Left cardiac atrium (tissue), 4 donors: ENCODE measurements at regions of chr13 and their contacts with region 1.

Region 1: DNA sequence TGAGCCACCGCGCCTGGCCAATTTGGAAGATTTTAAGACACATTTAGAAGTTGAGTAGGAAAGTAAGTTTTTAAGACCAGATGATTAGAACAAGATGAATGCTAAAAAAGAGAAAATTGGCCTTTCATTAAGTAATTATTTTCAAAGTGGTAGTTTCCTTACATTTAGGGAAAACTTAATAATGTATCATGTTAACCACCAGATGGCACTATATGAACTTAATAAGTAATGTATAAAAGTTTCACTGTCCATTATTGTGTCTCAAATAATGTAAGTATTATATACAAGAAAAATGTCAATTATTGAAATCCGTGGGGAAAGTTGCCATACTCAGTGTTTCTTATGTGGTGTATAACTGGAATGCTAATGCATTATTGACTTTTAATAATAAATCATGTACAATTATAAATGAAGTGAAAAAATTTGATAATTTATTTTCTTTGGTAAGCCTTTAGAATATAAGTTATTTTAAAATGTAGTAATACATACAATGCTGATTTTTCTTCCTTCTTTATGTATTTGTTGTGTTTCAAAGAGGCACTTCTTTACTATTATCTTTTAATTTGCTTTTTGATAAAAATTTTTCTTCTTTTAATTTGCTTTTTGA is 29.2 kb downstream of the COG6 start:
- DNase-seq: no peak
- ATAC-seq: no peak

Region 2: GRCh38 chr13:39641645-39642044 is 43.0 kb before region 1 on chr13:
- intact Hi-C with region 1: no loop called
- DNase-seq: no peak
- ATAC-seq: no peak

Region 3: DNA sequence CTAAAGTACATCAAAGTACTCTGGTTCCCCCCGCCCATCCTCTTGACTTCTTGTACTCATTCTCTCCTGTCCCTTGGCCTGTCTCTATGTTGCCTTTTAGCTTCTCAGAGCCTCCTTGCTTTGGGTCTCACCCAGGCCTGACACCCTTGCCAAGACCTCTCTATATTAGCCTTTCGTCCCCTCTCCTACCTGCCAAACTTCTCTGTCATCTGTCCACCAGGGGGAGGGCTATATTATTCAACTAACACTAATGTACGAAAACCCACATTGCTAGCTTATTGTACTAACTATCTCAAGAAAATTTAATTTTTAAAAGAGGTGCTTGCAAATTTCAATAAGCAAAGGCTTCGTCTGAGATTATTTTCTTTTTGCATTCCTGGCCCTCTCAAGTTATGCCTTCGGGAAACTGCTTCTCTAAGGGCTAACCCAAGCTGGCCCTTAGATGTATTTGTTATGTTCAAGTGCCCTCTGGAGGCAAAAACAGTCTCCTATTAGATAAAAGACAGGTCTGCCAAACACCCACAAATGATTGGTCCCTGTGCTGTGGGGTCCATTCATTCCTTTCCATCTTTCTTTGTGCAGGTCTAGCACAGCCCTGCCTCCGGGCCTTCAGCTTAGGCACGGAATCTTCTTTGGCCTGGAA is 1092.7 kb after region 1 on chr13:
- intact Hi-C with region 1: loop called in 1 of 2 experiments (anchors 5 kb)
- DNase-seq: no peak
- ATAC-seq: peak; percentile 84